ENCODE measurements at regions of chr9 and their contacts with region 1.

Region 1: GRCh38 chr9:621201-621855 is 220.2 kb upstream of the DMRT1 start:
- DNase-seq: no peak
- ATAC-seq: no peak
- H3K4me3 ChIP-seq: no peak overlapping the region
- H3K27ac ChIP-seq: no peak overlapping the region
- H3K4me1 ChIP-seq: no peaks in the 10 kb centered on the region
- H3K27me3 ChIP-seq: no peaks in the 10 kb centered on the region
- CTCF ChIP-seq: no peak
- POLR2A ChIP-seq: no peak
- RAD21 ChIP-seq: no peak

Region 2: DNA sequence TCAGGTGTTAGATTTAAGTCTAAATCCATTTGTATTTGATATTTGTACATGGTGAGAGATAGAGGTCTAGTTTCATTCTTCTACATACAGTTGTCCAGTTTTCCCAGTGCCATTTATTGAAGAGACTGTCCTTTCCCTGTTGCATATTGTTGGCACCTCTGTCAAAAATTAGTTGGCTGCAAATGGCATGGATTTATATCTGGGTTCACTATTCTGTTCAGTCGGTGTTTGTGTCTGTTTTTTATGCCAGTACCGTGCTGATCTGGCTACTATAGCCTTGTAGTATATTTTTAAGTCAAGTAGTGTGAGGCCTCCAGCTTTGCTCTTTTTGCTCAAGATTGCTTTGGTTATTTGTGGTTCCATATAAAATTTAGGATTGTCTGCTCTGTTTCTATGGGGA is 44.0 kb after region 1 on chr9:
- CTCF ChIA-PET with region 1: no interaction called
- POLR2A ChIA-PET with region 1: no interaction called
- dilution Hi-C with region 1: no loop called
- in situ Hi-C with region 1: no loop called
- intact Hi-C with region 1: loop called (anchors 5 kb)
- DNase-seq: no peak
- ATAC-seq: no peak
- H3K4me3 ChIP-seq: no peak overlapping the region
- H3K27ac ChIP-seq: no peak overlapping the region
- H3K4me1 ChIP-seq: no peaks in the 10 kb centered on the region
- H3K27me3 ChIP-seq: no peaks in the 10 kb centered on the region
- CTCF ChIP-seq: no peak
- POLR2A ChIP-seq: no peak
- RAD21 ChIP-seq: no peak

Region 3: GRCh38 chr9:757246-757881 is 136.0 kb after region 1 on chr9:
- CTCF ChIA-PET with region 1: no interaction called
- POLR2A ChIA-PET with region 1: no interaction called
- dilution Hi-C with region 1: no loop called
- in situ Hi-C with region 1: loop called (anchors 5 kb)
- intact Hi-C with region 1: no loop called
- DNase-seq: peak; percentile 67
- ATAC-seq: peak; percentile 84
- H3K4me3 ChIP-seq: no peak overlapping the region
- H3K27ac ChIP-seq: no peak overlapping the region
- H3K4me1 ChIP-seq: peaks cover 9% of the 10 kb centered on the region
- H3K27me3 ChIP-seq: no peaks in the 10 kb centered on the region
- CTCF ChIP-seq: peak; percentile 64
- POLR2A ChIP-seq: no peak
- RAD21 ChIP-seq: peak; percentile 79

Region 4: DNA sequence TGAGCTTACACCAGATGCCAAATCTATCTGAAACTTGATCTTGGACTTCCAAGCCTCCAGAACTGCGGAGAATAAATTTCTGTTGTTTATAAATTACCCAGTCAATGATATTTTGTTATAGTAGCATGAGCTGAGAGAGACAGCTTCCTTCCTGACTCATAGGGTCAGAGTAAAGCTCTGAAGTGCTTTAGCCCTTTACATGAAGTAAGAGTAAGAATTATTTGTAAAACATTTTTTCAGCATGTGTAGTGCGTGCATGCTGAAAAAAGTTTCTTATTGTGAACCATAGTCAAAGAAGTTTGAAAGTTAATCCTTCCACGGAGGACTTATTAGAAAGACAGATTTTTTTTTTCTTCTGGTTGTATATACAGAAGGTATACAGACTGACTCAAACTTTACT is 601.2 kb after region 1 on chr9:
- CTCF ChIA-PET with region 1: no interaction called
- POLR2A ChIA-PET with region 1: no interaction called
- dilution Hi-C with region 1: no loop called
- in situ Hi-C with region 1: no loop called
- intact Hi-C with region 1: no loop called
- DNase-seq: peak; percentile 76
- ATAC-seq: peak; percentile 65
- H3K4me3 ChIP-seq: no peak overlapping the region
- H3K27ac ChIP-seq: no peak overlapping the region
- H3K4me1 ChIP-seq: no peaks in the 10 kb centered on the region
- H3K27me3 ChIP-seq: no peaks in the 10 kb centered on the region
- CTCF ChIP-seq: no peak
- POLR2A ChIP-seq: no peak
- RAD21 ChIP-seq: no peak

Measured in IMR-90 (cell line).